Cardiac septum (tissue), 1 donor: ENCODE measurements at regions of chr12 and their contacts with region 1.

Region 1: DNA sequence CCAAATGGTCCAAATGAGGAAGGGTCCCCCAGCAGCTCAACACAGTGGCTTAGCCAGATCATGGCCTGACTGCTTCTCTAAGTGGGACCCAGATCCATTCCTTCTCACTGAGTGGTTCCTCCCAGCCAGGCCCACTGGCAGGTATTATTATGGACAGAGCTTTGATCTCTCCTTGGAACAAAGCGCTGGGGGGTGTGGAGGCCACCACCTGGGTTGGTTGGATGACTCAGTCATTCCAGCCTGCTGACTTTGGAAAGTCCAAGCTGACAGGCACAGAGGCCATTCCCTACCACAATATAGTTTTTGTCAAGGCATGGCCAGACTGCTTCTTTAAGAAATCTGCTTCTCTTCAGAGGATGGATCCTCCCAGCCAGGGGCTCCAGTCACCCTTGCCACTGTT is 341.1 kb downstream of the BTG1 start:
- DNase-seq: no peak

Region 2: GRCh38 chr12:91561958-91562875 is 242.3 kb before region 1 on chr12:
- intact Hi-C with region 1: no loop called
- DNase-seq: no peak

Region 3: GRCh38 chr12:91588874-91589454 is 215.6 kb before region 1 on chr12:
- intact Hi-C with region 1: loop called (anchors 5 kb)
- DNase-seq: no peak